BJ (cell line): ENCODE measurements at regions of chr17 and their contacts with region 1.

Region 1: DNA sequence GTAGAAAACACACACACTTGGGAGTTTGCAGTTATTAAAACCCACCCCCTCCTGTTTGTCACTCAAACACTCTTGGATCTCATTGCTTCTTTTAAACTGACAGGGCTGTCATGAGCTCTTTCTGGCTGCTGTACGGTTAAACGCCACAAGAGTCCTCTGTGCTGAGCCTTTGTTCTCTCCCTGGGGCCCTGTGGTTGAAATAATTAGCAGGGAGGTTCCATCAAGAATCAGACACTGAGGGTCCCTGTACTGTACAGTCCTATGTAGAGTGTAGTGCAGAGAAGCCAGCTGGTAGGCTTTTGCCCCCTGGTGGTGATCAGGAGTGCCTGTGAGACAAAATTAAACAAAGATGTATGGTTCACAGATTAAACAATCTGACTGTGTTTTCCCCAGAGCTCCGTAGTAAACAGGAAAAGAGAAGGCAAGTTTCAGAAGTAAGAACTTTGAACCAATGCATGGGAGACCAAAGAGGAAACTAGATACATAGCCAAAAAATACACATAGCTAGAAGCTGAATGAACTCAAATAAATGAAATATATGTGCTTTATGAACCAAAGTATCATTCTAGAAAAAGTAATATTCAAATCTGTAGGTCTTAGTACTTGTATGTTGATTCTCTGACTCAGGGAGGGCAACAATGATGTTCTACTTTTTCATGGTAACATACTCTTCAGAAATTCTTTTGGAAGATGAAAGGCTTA is 1.4 kb upstream of the SSH2 start:
- DNase-seq: no peak
- H3K4me3 ChIP-seq: no peak overlapping the region
- H3K27me3 ChIP-seq: no peaks in the 10 kb centered on the region
- CTCF ChIP-seq: peak; percentile 93

Region 2: DNA sequence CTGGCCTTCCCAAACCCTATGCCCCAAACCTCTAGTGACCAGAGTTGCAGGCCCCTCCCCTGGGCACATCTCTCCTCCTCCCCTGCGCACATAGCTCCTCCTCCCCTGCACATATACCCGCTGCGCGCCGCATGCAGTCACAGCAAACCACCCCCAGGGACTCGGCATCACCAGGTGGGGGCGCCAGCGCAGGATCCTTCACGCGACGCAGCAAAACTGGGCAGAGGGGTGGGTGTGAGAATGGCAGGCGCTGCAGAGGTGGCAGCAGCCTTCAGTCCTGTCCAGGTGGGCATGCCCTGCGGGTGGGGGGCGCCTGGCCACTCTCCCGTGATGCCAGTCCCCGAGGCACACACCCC is 314.3 kb before region 1 on chr17:
- CTCF ChIA-PET with region 1: interaction called, 12 read pairs
- POLR2A ChIA-PET with region 1: no interaction called
- DNase-seq: no peak
- H3K4me3 ChIP-seq: no peak overlapping the region
- H3K27me3 ChIP-seq: no peaks in the 10 kb centered on the region
- CTCF ChIP-seq: peak; percentile 68

Region 3: DNA sequence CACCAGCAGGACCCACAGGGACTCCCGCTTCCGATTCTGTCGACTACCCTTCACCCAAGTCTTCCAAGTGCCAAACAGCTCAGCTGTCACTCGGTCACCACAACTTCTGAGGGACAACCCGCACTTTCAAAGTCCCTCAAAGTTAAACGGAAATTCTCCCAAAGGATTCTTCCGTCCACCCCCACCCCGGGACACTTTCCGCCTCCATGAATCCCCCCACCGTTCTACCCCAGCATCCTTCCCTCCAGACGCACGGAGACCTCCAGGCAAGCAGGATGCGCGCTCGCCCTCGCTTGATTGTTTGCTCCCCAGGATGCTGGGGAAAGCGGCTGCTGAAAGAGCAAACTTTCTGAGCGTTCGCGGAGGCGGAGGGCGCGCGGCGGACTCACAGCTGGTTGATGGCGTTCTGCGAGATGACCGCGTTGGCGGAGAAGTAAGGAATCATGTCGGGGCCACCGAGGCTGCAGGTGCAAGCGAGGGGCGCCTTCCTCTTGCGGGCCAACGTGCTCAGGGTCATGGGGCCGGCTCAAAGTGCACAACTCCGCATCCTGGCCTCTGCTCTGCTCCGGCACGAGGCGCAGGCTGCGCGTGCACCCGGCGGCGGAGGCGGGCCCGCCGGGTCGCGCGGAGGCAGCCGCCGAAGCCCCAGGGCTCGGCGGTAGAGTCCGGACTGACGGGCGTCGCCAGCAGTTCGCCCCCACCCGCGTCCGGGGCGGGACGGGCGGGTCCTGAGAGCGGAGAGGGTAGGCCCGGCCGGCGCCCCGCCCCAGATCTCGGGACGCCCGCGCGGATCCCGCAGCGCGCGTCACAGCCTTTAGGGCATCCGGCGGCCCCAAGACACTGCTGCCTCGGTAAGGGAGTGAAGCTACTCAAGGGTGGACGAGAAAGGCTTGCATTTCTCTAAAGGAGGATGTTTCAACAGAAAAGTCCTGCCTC is 170.4 kb before region 1 on chr17:
- CTCF ChIA-PET with region 1: no interaction called
- POLR2A ChIA-PET with region 1: no interaction called
- DNase-seq: peak; percentile 39
- H3K4me3 ChIP-seq: peak overlapping the region; percentile 70
- H3K27me3 ChIP-seq: no peaks in the 10 kb centered on the region
- CTCF ChIP-seq: no peak

Region 4: GRCh38 chr17:29807520-29808351 is 123.6 kb before region 1 on chr17:
- CTCF ChIA-PET with region 1: interaction called, 224 read pairs
- POLR2A ChIA-PET with region 1: interaction called, 3 read pairs
- DNase-seq: no peak
- H3K4me3 ChIP-seq: no peak overlapping the region
- H3K27me3 ChIP-seq: no peaks in the 10 kb centered on the region
- CTCF ChIP-seq: peak; percentile 73

Region 5: DNA sequence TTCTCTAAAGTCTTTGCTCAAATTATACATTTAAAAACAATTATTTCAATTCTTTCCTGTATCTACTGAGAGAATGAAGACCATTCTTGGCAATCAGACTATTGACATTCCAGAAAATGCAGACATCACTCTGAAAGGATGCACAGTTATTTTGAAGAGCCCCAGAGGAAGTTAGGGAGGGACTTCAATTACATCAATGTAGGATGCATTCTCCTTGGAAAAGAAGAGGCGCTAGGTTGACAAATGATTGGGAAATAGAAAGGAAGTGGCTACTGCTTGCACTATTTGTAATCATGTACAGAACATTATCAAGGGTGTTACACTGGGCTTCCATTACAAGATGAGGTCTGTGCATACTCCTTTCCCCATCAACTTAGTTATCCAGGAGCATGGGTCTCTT is 75.7 kb before region 1 on chr17:
- CTCF ChIA-PET with region 1: interaction called, 9 read pairs
- POLR2A ChIA-PET with region 1: interaction called, 16 read pairs
- DNase-seq: no peak
- H3K4me3 ChIP-seq: no peak overlapping the region
- H3K27me3 ChIP-seq: no peaks in the 10 kb centered on the region
- CTCF ChIP-seq: no peak

Region 6: GRCh38 chr17:29918922-29919856 is 12.2 kb before region 1 on chr17:
- CTCF ChIA-PET with region 1: interaction called, 34 read pairs
- POLR2A ChIA-PET with region 1: interaction called, 5 read pairs
- DNase-seq: no peak
- H3K4me3 ChIP-seq: no peak overlapping the region
- H3K27me3 ChIP-seq: no peaks in the 10 kb centered on the region
- CTCF ChIP-seq: no peak

Region 7: DNA sequence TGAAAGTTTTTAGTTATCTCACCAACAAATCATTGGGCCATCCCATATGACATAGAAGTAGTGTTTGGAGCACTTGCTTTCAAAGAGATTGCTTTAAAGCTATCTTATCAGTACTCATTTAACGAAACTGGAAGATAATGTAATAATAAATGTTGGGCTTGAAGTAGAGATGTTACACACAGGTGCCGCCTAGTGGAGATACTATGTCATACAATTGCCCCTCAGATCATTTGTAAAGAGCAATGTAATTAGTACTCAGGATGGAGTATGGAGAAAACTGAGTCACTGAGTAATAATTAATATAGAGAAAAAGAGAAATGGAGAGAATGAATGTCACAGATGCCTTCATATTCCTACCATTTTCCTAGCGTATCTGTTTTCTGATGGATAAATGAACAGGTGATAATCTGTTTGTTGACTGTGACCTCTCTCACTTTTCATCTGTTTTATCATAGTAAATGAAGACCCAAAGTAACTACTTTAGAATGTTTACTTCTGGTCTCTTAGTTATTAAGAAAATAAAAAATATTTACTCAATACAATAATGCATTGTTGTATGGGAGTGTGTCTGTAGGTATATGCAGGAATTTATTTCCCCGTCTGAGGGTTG is 90.4 kb after region 1 on chr17:
- CTCF ChIA-PET with region 1: interaction called, 13 read pairs
- POLR2A ChIA-PET with region 1: no interaction called
- DNase-seq: no peak
- H3K4me3 ChIP-seq: no peak overlapping the region
- H3K27me3 ChIP-seq: no peaks in the 10 kb centered on the region
- CTCF ChIP-seq: peak; percentile 81

Region 8: GRCh38 chr17:30278032-30278431 is 346.6 kb after region 1 on chr17:
- CTCF ChIA-PET with region 1: no interaction called
- POLR2A ChIA-PET with region 1: no interaction called
- DNase-seq: no peak
- H3K4me3 ChIP-seq: no peak overlapping the region
- H3K27me3 ChIP-seq: no peaks in the 10 kb centered on the region
- CTCF ChIP-seq: peak; percentile 41